ENCODE measurements at regions of chr6 and their contacts with region 1.

Region 1: DNA sequence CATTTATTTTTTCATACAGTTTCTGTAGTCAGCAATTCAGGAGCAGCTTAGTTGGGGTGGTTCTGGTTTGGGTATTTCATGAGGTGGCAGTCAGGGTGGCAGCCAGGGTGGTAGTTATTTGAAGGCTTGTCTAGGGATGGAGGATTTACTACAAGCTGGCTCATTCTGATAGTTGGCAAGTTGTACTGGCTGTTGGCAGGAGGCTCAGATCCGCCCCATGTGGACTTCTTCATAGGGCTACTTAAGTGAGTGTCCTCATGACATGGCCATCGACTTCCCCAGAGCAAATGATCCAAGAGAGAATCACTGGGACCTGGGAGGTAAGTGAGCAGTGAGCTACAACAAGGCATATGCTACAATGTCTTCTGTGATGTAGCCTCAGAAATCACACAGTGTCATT is 22.4 kb upstream of the CDKAL1 start:
- DNase-seq: no peak
- H3K4me3 ChIP-seq: no peak overlapping the region
- H3K27ac ChIP-seq: no peak overlapping the region
- H3K4me1 ChIP-seq: no peaks in the 10 kb centered on the region
- H3K27me3 ChIP-seq: no peaks in the 10 kb centered on the region
- CTCF ChIP-seq: no peak
- EP300 ChIP-seq: no peak
- POLR2A ChIP-seq: no peak

Region 2: DNA sequence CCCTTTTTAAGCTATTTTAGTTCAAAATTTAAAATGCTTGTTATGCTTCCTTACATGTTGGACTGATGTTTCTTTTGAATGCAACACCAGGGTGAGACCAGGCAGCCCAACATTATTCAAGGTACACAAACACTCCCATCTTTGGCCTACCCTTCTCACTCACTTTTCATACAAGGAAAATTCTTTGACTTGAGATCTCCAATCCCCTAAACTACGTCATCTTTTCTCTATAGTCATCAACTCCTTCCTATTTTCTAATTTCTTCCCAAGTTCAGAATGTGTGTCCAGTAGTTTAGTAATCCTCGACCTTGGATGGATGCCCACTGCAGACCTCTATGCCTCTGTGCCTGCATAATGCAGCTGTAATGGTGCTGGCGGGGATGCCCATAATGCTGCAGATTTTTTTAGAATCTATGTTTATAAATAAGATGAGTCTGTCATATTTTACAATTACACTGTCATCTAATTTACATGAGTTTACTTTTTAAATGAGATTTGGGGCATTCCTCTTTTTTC is 566.0 kb before region 1 on chr6:
- in situ Hi-C with region 1: no loop called
- intact Hi-C with region 1: loop called (anchors 5 kb)
- DNase-seq: no peak
- H3K4me3 ChIP-seq: no peak overlapping the region
- H3K27ac ChIP-seq: no peak overlapping the region
- H3K4me1 ChIP-seq: no peaks in the 10 kb centered on the region
- H3K27me3 ChIP-seq: no peaks in the 10 kb centered on the region
- CTCF ChIP-seq: no peak
- EP300 ChIP-seq: no peak
- POLR2A ChIP-seq: no peak

Region 3: GRCh38 chr6:20474874-20475542 is 36.8 kb before region 1 on chr6:
- in situ Hi-C with region 1: no loop called
- intact Hi-C with region 1: loop called (anchors 2 kb)
- DNase-seq: no peak
- H3K4me3 ChIP-seq: no peak overlapping the region
- H3K27ac ChIP-seq: no peak overlapping the region
- H3K4me1 ChIP-seq: no peaks in the 10 kb centered on the region
- H3K27me3 ChIP-seq: no peaks in the 10 kb centered on the region
- CTCF ChIP-seq: no peak
- EP300 ChIP-seq: no peak
- POLR2A ChIP-seq: no peak